H1 (cell line): ENCODE measurements at regions of chr22 and their contacts with region 1.

Region 1: GRCh38 chr22:41576877-41577276 is 12.8 kb downstream of the PMM1 start:
- DNase-seq: peak in 1 of 2 experiments; percentile 85
- H3K4me3 ChIP-seq: no peak overlapping the region
- H3K27ac ChIP-seq: no peak overlapping the region
- H3K4me1 ChIP-seq: no peaks in the 10 kb centered on the region; a peak in 2 of 7 replicates
- H3K27me3 ChIP-seq: no peaks in the 10 kb centered on the region
- CTCF ChIP-seq: peak; percentile 94 to 99 (median 98)
- EP300 ChIP-seq: no peak
- POLR2A ChIP-seq: no peak
- RAD21 ChIP-seq: peak; percentile 75 to 85

Region 2: DNA sequence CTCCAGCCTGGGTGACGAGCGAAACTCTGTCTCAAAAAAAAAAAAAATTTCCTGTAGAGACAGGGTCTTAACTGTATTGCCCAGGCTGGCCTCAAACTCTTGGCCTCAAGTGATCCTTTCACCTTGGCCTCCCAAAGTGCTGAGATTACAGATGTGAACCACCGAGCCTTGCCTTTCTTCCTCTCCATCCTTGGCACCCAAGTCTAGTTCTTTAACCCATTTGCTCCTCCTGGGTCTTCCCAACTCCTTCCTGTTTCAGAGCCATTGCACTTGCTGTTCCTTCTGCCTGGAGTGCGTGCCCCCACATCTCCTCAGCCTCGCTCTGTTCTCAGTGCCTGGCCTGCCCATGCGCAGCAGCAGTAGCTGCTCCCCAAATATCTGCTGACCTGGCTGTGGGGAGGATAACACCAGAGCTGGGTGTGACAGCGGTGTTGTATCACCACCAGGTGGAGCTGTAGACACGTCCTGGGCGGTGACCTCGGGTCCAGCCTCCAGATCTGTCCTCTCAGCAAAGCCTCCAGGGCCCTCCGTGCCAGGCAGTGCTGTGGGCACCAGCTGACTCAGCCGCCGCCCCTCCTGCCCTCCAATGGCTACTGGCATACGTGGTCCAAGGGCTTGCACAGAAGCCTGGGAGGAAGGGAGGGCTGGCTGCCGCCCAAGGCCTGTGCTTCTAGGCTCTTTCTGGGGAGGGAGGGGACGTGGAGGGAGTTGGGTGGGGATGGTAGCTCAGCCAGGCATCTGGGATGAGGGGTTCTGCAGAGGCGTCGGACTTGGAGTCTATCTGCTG is 173.2 kb before region 1 on chr22:
- CTCF ChIA-PET with region 1: no interaction called
- POLR2A ChIA-PET with region 1: no interaction called
- DNase-seq: peak; percentile 66 to 90
- H3K4me3 ChIP-seq: no peak overlapping the region
- H3K27ac ChIP-seq: no peak overlapping the region
- H3K4me1 ChIP-seq: peaks cover 0 to under 1% (median 0%) of the 10 kb centered on the region in 4 experiments; a peak in 1 of 7 replicates
- H3K27me3 ChIP-seq: no peaks in the 10 kb centered on the region
- CTCF ChIP-seq: peak; percentile 95 to 100 (median 99)
- EP300 ChIP-seq: no peak
- POLR2A ChIP-seq: no peak
- RAD21 ChIP-seq: peak; percentile 99

Region 3: DNA sequence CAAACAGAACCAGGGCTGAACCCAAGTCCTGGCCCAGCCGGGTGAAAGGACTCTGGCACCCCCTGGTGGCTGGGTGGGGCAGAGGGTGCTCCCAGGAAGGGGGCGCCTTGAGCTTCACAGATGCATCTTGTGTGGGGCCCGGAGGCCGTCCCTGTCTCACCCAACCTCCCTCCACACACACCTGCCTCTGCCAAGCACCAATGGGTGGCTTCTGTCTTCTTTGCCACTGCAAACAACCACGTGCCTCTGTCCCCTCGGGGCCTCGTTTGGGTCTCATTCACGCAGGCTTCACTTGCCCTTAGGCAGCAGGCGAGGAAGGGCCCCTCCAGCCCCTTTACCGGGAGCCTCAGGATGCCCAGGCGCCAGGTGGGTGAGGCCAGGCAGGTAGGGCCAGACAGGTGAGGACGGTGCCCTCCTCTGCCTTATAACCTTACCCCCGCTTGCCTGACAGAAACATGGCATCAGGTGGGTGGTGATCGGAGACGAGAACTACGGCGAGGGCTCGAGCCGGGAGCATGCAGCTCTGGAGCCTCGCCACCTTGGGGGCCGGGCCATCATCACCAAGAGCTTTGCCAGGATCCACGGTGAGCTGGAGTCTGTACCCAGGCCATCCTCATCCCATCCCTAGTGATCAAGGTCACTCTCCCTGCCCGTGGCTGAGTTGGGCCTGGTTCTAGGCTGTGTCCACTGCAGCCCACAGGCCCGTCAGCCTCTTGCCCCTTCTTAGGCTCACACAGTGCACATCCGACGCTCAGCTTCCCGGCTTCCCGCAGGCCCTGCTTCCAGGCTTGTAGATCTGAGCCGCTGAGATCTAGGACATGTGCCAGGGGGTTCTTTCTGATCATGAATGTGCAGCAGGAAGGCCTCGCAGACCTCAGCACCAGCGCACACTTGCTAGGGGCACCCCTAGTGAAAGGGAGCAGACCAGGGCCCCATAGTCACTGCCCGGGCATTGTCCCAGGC is 49.8 kb before region 1 on chr22:
- CTCF ChIA-PET with region 1: interaction called, 17 read pairs
- POLR2A ChIA-PET with region 1: interaction called, 3 read pairs
- DNase-seq: peak in 1 of 2 experiments; percentile 90
- H3K4me3 ChIP-seq: no peak overlapping the region
- H3K27ac ChIP-seq: no peak overlapping the region
- H3K4me1 ChIP-seq: no peaks in the 10 kb centered on the region; a peak in 1 of 7 replicates
- H3K27me3 ChIP-seq: no peaks in the 10 kb centered on the region
- CTCF ChIP-seq: peak; percentile 76 to 91 (median 85)
- EP300 ChIP-seq: no peak
- POLR2A ChIP-seq: peak in 1 of 2 experiments; percentile 62; a peak in 1 of 3 replicates
- RAD21 ChIP-seq: peak; percentile 70 to 76

Region 4: DNA sequence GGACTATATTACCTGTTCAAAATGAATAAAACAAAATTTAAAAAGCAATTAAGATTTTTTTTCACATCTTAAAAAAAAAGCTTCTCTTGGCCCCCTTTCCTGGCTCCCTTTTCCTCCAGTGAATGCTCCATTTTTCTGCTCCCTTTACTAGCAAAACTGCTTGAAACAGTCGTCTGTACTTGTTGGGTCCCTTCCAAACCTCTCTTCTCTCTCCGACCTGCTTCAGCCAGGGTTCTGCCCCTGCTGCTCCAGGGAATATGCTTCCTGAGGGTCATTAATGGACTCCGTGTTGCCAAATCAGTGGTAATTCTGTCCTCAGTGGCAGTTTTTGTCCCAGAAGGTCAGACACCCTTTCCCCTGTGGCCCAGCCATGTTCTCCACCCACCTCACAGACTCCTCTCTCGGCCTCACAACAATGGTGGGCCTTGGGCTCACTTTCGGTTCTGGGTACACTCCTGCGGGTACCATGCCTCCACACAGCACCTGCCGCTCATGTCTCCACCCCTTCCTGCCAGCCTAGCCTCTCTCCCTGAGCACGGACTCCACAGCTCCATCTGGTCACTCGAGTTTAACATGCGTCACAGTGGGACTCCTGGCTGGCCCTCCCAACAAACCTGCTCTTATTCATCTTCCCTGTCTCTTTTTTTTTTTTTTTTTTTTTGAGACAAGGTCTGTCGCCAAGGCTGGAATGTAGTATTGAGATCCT is 24.8 kb before region 1 on chr22:
- CTCF ChIA-PET with region 1: interaction called, 169 read pairs
- POLR2A ChIA-PET with region 1: interaction called, 5 read pairs
- DNase-seq: no peak
- H3K4me3 ChIP-seq: no peak overlapping the region
- H3K27ac ChIP-seq: no peak overlapping the region
- H3K4me1 ChIP-seq: peaks cover 0 to 2% (median 1%) of the 10 kb centered on the region in 4 experiments; a peak in 3 of 7 replicates
- H3K27me3 ChIP-seq: no peaks in the 10 kb centered on the region
- CTCF ChIP-seq: no peak
- EP300 ChIP-seq: no peak
- POLR2A ChIP-seq: no peak
- RAD21 ChIP-seq: no peak

Region 5: GRCh38 chr22:41557401-41558240 is 19.3 kb before region 1 on chr22:
- CTCF ChIA-PET with region 1: interaction called, 169 read pairs
- POLR2A ChIA-PET with region 1: interaction called, 12 read pairs
- DNase-seq: peak in 1 of 2 experiments; percentile 58
- H3K4me3 ChIP-seq: no peak overlapping the region; a peak in 1 of 8 replicates
- H3K27ac ChIP-seq: no peak overlapping the region
- H3K4me1 ChIP-seq: peaks cover 4 to 28% (median 19%) of the 10 kb centered on the region in 4 experiments
- H3K27me3 ChIP-seq: no peaks in the 10 kb centered on the region
- CTCF ChIP-seq: no peak
- EP300 ChIP-seq: no peak
- POLR2A ChIP-seq: no peak
- RAD21 ChIP-seq: no peak

Region 6: DNA sequence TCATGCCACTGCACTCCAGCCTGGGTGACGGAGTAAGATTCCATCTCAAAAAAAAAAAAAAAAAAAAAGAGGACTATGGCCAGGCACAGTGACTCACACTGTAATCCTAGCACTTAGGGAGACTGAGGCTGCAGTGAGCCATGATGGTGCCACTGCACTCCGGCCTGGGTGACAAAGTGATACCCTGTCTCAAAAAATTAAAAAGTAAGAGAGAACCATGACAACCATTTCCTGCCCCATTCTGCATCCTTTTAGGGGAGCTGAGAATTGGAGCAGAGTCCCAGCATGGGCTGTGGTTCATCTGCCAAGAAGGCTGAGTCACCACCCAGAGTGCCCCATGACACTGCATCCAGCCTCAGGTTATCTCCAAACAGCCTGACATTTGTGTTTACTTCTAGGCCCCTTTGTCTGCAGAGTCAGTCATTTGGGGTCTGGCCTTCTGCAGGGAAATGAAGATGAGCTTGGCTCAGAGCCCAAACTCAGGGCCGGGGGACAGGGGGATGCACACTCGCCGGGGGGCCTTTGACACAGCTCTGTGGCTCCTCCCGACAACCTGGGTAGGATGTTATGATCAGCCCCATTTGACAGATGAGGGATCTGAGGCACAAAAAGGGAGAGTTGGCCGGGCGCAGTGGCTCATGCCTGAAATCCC is 11.3 kb before region 1 on chr22:
- CTCF ChIA-PET with region 1: interaction called, 169 read pairs
- POLR2A ChIA-PET with region 1: interaction called, 12 read pairs
- DNase-seq: no peak
- H3K4me3 ChIP-seq: no peak overlapping the region
- H3K27ac ChIP-seq: no peak overlapping the region
- H3K4me1 ChIP-seq: peaks cover 4 to 28% (median 19%) of the 10 kb centered on the region in 4 experiments
- H3K27me3 ChIP-seq: 0 out of 7 replicates have a peak, but pooled peaks cover 0 to 3% (median 0%) of the 10 kb centered on the region in 4 experiments
- CTCF ChIP-seq: no peak
- EP300 ChIP-seq: no peak
- POLR2A ChIP-seq: no peak
- RAD21 ChIP-seq: no peak

Region 7: GRCh38 chr22:41589391-41590241 is 12.7 kb after region 1 on chr22 and contains the start of gene PMM1:
- CTCF ChIA-PET with region 1: interaction called, 63 read pairs
- POLR2A ChIA-PET with region 1: interaction called, 42 read pairs
- DNase-seq: peak; percentile 100
- H3K4me3 ChIP-seq: peak within 1 kb of the TSS; percentile 74 to 87 (median 82)
- H3K27ac ChIP-seq: no peak within 1 kb of the TSS; the same call in 1 of the 2 replicates
- H3K4me1 ChIP-seq: peaks cover 0 to 8% (median 4%) of the 10 kb centered on the region in 4 experiments; a peak in 4 of 7 replicates
- H3K27me3 ChIP-seq: no peaks in the 10 kb centered on the region
- CTCF ChIP-seq: peak in 1 of 3 experiments; percentile 16; a peak in 1 of 4 replicates
- EP300 ChIP-seq: peak in 1 of 2 experiments; percentile 64; a peak in 1 of 3 replicates
- POLR2A ChIP-seq: peak in 1 of 2 experiments; percentile 55; a peak in 2 of 3 replicates
- RAD21 ChIP-seq: no peak
- total RNA-seq, gene PMM1: 10.8 and 11.3 TPM in 2 replicates

Region 8: DNA sequence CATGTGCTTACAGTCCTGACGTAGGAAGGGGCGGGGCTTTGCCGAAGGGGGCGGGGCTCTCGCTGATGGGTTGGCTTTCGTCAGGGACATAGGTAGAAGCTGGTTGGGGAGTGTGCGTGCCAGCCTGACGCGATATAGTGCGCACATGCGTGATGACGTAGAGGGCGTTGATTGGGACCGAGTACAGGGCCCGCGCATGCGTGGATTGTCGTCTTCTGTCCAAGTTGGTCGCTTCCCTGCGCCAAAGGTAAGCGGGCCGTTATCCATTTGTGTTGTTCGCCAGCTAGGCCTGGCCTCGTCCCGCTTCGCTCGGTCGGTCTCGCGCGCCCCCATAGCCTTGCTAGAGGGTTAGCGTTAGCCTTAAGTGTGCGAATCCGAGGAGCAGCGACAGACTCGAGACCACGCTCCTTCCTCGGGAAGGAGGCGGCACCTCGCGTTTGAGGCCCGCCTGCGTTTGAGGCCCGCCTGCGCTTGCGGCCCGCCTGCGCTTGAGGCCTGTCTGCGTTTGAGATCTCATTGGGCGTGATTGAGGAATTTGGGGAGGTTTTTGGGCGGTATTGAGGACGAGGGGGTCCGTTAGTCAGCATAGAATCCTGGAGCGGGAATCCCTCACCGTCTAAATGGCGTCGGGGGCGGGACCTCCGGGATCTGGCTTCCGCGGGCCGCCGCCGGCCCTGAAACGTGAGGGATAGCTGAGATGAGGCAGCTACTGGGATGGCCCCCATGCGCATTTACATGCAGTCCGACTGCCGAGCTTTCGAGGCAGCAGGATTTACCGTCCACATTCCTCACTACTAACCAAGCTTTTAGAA is 44.4 kb after region 1 on chr22 and contains the start of gene XRCC6:
- CTCF ChIA-PET with region 1: interaction called, 18 read pairs
- POLR2A ChIA-PET with region 1: interaction called, 3 read pairs
- DNase-seq: peak; percentile 100
- H3K4me3 ChIP-seq: peak within 1 kb of the TSS; percentile 78 to 98 (median 96)
- H3K27ac ChIP-seq: peak within 1 kb of the TSS; percentile 98
- H3K4me1 ChIP-seq: peaks cover 0 to 11% (median 4%) of the 10 kb centered on the region in 4 experiments; a peak in 5 of 7 replicates
- H3K27me3 ChIP-seq: no peaks in the 10 kb centered on the region
- CTCF ChIP-seq: no peak
- EP300 ChIP-seq: 0 out of 3 replicates have a peak, but pooled peaks of 1 of the 2 experiments have one; percentile 7
- POLR2A ChIP-seq: peak; percentile 91 to 95
- RAD21 ChIP-seq: no peak
- total RNA-seq, gene XRCC6: 488 and 490 TPM in 2 replicates

Region 9: GRCh38 chr22:41672775-41673509 is 96.1 kb after region 1 on chr22:
- CTCF ChIA-PET with region 1: no interaction called
- POLR2A ChIA-PET with region 1: no interaction called
- DNase-seq: no peak
- H3K4me3 ChIP-seq: no peak overlapping the region
- H3K27ac ChIP-seq: no peak overlapping the region
- H3K4me1 ChIP-seq: no peaks in the 10 kb centered on the region
- H3K27me3 ChIP-seq: no peaks in the 10 kb centered on the region
- CTCF ChIP-seq: peak in 1 of 3 experiments; percentile 26; a peak in 1 of 4 replicates
- EP300 ChIP-seq: no peak
- POLR2A ChIP-seq: no peak
- RAD21 ChIP-seq: peak in 1 of 2 experiments; percentile 7; a peak in 1 of 4 replicates